ENCODE measurements at regions of chr17 and their contacts with region 1.

Region 1: GRCh38 chr17:33218657-33219601 is 74.2 kb downstream of the ASIC2 start:
- DNase-seq: no peak
- ATAC-seq: no peak
- H3K4me3 ChIP-seq: no peak overlapping the region
- H3K27ac ChIP-seq: 0 out of 2 replicates have a peak overlapping the region, but pooled peaks have one; percentile 12
- H3K4me1 ChIP-seq: peaks cover 14% of the 10 kb centered on the region; the same call in 1 of the 2 replicates
- H3K27me3 ChIP-seq: no peaks in the 10 kb centered on the region
- CTCF ChIP-seq: no peak

Region 2: DNA sequence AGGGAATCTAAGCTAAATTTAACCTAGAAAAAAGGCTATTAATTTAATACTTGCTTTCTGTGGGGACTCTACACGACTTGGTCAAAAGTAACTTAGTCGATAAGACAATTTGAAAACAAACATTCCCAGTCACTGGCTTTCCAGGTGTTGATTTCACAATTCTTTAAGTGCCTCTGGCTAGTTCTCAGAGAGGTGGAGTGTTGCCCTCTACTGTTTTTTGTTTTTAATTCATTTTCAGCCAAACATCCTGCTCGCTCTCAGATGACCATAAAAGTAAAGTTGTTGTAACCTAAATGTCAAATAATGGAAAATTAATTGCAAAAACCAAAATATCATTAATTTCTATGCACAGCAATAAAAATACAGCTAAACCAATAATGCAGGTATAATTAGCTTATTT is 449.1 kb before region 1 on chr17:
- CTCF ChIA-PET with region 1: no interaction called
- POLR2A ChIA-PET with region 1: no interaction called
- in situ Hi-C with region 1: no loop called
- intact Hi-C with region 1: no loop called
- DNase-seq: no peak
- ATAC-seq: no peak
- H3K4me3 ChIP-seq: no peak overlapping the region
- H3K27ac ChIP-seq: no peak overlapping the region
- H3K4me1 ChIP-seq: 0 out of 2 replicates have a peak, but pooled peaks cover 3% of the 10 kb centered on the region
- H3K27me3 ChIP-seq: peaks cover 22% of the 10 kb centered on the region
- CTCF ChIP-seq: peak; percentile 22; the same call in 1 of the 2 replicates

Region 3: DNA sequence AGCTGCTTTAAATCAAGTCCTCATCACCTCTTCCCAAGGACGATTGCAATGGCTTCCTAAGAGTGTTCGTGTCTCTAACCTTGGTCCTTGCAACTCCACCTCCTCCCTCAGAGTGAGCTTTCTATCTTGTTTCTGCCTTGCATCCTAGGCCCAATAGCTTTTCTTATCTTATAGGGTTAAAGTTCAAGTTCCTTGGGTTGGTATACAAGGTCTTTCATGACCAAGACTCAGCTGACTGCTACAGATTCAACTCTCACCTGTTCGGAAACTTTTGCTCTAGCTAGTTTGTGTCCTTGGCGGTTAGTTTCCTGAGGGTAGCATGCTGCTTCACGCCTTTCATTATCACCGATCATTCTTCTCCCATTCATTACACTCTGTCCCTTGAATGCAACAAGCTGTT is 216.7 kb before region 1 on chr17:
- CTCF ChIA-PET with region 1: no interaction called
- POLR2A ChIA-PET with region 1: no interaction called
- in situ Hi-C with region 1: no loop called
- intact Hi-C with region 1: no loop called
- DNase-seq: no peak
- ATAC-seq: no peak
- H3K4me3 ChIP-seq: no peak overlapping the region
- H3K27ac ChIP-seq: no peak overlapping the region
- H3K4me1 ChIP-seq: no peaks in the 10 kb centered on the region
- H3K27me3 ChIP-seq: no peaks in the 10 kb centered on the region
- CTCF ChIP-seq: no peak

Region 4: DNA sequence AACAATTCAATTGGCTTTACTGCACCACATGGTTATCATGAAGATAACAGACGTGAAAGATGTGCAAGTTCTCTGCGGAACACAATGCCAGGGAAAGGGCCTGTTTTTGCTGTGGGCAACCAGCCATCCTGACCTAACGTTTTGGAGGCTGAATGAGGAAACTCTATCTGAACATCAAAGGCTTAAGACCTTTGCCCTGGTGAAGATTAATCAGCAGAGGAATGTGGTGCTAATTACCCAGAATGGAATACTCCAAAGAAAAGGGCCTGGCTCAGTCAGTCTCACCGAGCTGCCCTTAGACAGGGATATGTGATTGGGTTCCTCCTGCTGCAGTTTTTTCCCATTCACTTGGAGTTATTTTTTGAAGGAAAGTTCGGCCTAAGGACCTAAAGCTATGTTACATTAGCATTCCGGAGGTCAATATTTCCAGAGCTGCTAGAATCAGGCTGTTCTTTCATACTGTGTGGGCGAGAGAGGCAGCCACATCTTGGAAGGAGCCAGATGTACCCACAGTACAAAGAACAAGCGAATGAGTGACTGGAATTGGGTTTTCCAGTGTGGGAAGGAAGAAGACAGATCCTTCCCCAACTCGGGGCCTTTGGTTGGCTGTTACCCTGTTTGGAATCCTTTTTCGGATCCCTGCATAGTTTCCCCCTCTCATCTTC is 58.6 kb after region 1 on chr17:
- CTCF ChIA-PET with region 1: no interaction called
- POLR2A ChIA-PET with region 1: no interaction called
- in situ Hi-C with region 1: no loop called
- intact Hi-C with region 1: loop called (anchors 10 kb)
- DNase-seq: no peak
- ATAC-seq: no peak
- H3K4me3 ChIP-seq: no peak overlapping the region
- H3K27ac ChIP-seq: peak overlapping the region; percentile 29; the same call in 1 of the 2 replicates
- H3K4me1 ChIP-seq: peaks cover 34% of the 10 kb centered on the region
- H3K27me3 ChIP-seq: no peaks in the 10 kb centered on the region
- CTCF ChIP-seq: no peak

Measured in Panc1 (cell line).